Gastrocnemius medialis (tissue), 4 donors: ENCODE measurements at regions of chr3 and their contacts with region 1.

Region 1: GRCh38 chr3:41198950-41199865 is at the start of gene CTNNB1:
- DNase-seq: peak; percentile 82 to 91
- ATAC-seq: peak; percentile 90 to 93
- H3K4me3 ChIP-seq: peak within 1 kb of the TSS; percentile 89 to 97 (median 94)
- H3K27ac ChIP-seq: peak within 1 kb of the TSS; percentile 95 to 99 (median 98)
- H3K4me1 ChIP-seq: peaks cover 25 to 39% of the 10 kb centered on the region in 2 donors
- H3K27me3 ChIP-seq: no peaks in the 10 kb centered on the region
- CTCF ChIP-seq: peak in 2 of 5 experiments; percentile 23 to 26
- POLR2A ChIP-seq: peak; percentile 93 to 96
- total RNA-seq, gene CTNNB1: 114 to 157 (median 150) TPM

Region 2: GRCh38 chr3:40309418-40309924 is 889.7 kb before region 1 on chr3 and contains the start of gene EIF1B:
- in situ Hi-C with region 1: loop called in 3 of 4 experiments (anchors 25 kb)
- intact Hi-C with region 1: loop called (anchors 5 kb)
- DNase-seq: peak; percentile 96 to 98
- ATAC-seq: peak; percentile 95 to 97
- H3K4me3 ChIP-seq: peak within 1 kb of the TSS; percentile 81 to 100 (median 95)
- H3K27ac ChIP-seq: peak within 1 kb of the TSS; percentile 96 to 99 (median 98)
- H3K4me1 ChIP-seq: peaks cover 41 to 49% of the 10 kb centered on the region in 2 donors
- H3K27me3 ChIP-seq: no peaks in the 10 kb centered on the region
- CTCF ChIP-seq: peak; percentile 80 to 95 (median 88)
- POLR2A ChIP-seq: peak; percentile 98
- total RNA-seq, gene EIF1B: 12.9 to 32.7 (median 24.5) TPM

Region 3: GRCh38 chr3:40557575-40558161 is 641.5 kb before region 1 on chr3:
- in situ Hi-C with region 1: no loop called
- intact Hi-C with region 1: no loop called
- DNase-seq: no peak
- ATAC-seq: no peak
- H3K4me3 ChIP-seq: no peak overlapping the region
- H3K27ac ChIP-seq: no peak overlapping the region
- H3K4me1 ChIP-seq: no peaks in the 10 kb centered on the region
- H3K27me3 ChIP-seq: no peaks in the 10 kb centered on the region
- CTCF ChIP-seq: no peak
- POLR2A ChIP-seq: no peak

Region 4: GRCh38 chr3:40584625-40585189 is 614.5 kb before region 1 on chr3:
- in situ Hi-C with region 1: loop called in 1 of 4 experiments (anchors 25 kb)
- intact Hi-C with region 1: loop called (anchors 10 kb)
- DNase-seq: peak; percentile 57 to 62
- ATAC-seq: peak; percentile 60 to 83
- H3K4me3 ChIP-seq: no peak overlapping the region
- H3K27ac ChIP-seq: no peak overlapping the region
- H3K4me1 ChIP-seq: no peaks in the 10 kb centered on the region
- H3K27me3 ChIP-seq: no peaks in the 10 kb centered on the region
- CTCF ChIP-seq: peak; percentile 63 to 95 (median 83)
- POLR2A ChIP-seq: no peak

Region 5: DNA sequence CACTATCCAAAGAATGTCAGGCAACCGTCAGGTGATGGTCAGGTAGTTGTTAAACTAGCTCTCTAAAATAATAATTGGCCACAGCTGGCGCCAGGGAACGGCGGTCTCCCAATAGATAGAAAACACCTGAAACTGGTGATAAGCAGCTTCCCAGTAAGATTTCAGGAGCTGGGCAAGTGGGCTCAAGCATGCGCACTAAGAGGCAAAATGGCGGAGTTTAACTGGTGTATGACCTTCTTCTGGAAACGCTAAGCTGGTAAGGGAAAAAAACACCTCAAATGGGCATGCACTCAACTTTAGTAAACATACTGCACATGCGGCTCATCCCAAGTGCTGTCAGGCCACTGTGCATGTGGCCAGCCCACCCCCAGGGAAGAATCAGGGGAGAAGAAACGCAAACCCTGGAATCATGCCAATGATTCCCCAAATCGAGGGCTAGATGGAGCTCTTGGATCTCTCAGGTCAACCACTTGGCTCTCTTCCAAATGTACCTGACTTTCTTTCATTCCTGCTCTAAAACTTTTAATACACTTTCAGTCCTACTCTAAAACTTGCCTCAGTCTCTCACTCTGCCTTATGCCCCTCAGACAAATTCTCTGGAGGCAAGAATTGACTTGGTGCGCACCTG is 479.4 kb before region 1 on chr3:
- in situ Hi-C with region 1: no loop called
- intact Hi-C with region 1: loop called (anchors 5 kb)
- DNase-seq: no peak
- ATAC-seq: no peak
- H3K4me3 ChIP-seq: no peak overlapping the region
- H3K27ac ChIP-seq: no peak overlapping the region
- H3K4me1 ChIP-seq: no peaks in the 10 kb centered on the region
- H3K27me3 ChIP-seq: no peaks in the 10 kb centered on the region
- CTCF ChIP-seq: peak in 3 of 5 experiments; percentile 27 to 53 (median 39)
- POLR2A ChIP-seq: no peak

Region 6: DNA sequence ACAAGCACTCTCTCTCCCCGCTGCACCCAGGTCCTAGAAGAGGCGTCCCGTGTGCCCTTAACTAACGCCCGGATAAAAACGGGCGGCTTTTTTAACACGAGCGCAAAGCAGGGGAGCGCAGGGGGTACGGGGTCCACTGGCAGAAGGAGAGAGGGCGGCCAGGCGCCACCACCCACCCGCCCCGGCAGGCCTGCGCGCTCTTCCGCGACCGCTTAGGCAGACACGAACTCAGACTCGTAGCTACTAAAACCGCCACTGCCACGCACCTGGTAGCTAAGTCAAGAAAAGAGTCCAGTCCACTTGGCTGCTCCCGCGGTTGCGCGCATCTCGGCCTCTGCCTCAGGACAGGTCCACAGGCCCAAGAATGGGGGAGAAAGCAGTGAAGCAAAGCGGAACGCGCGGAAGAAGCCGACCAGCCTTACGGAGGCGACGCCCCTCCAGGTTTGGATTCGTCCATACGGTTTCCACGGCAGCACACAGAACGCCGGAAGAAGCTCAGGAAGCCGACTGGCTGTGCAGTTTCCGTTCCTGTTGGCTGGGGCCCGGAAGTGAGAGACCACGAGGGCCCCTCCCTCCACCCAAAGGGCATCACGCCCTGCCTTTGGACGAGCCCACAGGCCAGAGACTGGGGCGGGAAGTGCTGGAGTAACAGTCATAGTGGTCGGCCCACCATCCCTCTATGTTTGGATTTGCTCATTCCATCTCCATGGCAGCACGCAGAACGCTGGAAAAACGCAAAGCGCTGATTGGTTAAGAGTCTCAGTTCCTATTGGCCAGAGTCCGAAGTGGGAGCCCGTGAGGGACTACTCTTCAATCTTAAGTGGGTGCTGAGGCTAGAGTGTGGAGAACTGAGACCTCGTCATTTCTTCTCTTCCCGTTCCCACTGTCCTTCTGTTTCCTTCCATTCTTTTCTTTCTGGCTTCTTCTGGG is 762.8 kb after region 1 on chr3 and contains the start of gene ULK4:
- in situ Hi-C with region 1: no loop called
- intact Hi-C with region 1: loop called (anchors 2 kb)
- DNase-seq: peak; percentile 96
- ATAC-seq: peak; percentile 98 to 99
- H3K4me3 ChIP-seq: peak within 1 kb of the TSS; percentile 71 to 95 (median 84)
- H3K27ac ChIP-seq: peak within 1 kb of the TSS; percentile 49 to 79 (median 74)
- H3K4me1 ChIP-seq: peaks cover 0 to 9% of the 10 kb centered on the region in 2 donors
- H3K27me3 ChIP-seq: no peaks in the 10 kb centered on the region
- CTCF ChIP-seq: no peak
- POLR2A ChIP-seq: peak in 1 of 2 donors; percentile 14
- total RNA-seq, gene ULK4: 2.0 to 3.0 (median 2.3) TPM